GM10248 (cell line): ENCODE measurements at regions of chr6 and their contacts with region 1.

Region 1: GRCh38 chr6:26122793-26123674 is 35.8 kb downstream of the HFE start:
- DNase-seq: peak; percentile 83
- CTCF ChIP-seq: no peak

Region 2: GRCh38 chr6:24554485-24554884 is 1568.5 kb before region 1 on chr6:
- CTCF ChIA-PET with region 1: no interaction called
- POLR2A ChIA-PET with region 1: no interaction called
- DNase-seq: no peak
- CTCF ChIP-seq: no peak

Region 3: DNA sequence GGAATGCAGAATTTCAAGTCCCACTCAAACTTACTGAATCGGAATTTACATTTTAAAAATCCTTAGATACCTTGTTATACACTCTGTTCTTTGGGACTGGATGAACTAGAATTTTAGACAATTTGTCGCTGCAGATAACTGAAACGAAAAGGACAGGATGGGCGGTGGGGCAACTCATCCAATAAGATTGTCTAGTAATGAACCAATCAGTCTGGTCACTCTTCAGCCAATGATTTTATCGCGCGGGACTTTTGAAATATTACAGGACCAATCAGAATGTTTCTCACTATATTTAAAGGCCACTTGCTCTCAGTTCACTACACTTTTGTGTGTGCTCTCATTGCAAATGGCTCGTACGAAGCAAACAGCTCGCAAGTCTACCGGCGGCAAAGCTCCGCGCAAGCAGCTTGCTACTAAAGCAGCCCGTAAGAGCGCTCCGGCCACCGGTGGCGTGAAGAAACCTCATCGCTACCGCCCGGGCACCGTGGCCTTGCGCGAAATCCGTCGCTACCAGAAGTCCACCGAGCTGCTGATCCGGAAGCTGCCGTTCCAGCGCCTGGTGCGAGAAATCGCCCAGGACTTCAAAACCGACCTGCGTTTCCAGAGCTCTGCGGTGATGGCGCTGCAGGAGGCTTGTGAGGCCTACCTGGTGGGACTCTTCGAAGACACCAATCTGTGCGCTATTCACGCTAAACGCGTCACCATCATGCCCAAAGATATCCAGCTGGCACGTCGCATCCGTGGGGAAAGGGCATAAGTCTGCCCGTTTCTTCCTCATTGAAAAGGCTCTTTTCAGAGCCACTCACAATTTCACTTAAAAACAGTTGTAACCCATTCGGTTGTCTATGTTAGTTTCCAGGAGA is 77.7 kb before region 1 on chr6:
- CTCF ChIA-PET with region 1: interaction called, 4 read pairs
- POLR2A ChIA-PET with region 1: interaction called, 40 read pairs
- DNase-seq: peak; percentile 88
- CTCF ChIP-seq: peak; percentile 12

Region 4: DNA sequence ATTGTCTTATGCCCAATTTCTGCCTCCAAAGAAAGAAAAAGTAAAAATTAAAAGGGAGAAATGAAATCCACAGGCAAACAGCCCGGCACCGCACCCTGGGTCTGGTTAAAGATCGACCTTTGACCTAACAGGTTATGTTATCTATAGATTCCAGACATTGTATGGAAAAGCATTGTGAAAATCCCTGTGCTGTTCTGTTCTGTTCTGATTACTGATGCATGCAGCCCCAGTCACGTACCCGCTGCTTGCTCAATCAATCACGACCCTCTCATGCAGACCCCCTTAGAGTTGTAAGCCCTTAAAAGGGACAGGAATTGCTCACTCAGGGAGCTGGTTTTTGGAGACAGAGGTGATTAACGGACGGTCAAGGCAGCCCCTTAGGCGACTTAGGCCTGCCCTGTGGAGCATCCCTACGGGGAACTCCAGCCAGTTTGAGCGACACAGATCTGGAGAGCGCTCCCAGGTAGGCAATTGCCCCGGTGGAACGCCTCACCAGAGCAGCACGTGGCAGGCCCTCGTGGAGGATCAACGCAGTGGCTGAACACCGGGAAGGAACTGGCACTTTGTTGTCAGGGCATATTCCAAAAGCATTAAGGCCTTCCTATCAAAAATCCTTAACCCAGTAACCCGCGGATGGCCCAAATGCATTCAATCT is 47.8 kb before region 1 on chr6:
- CTCF ChIA-PET with region 1: no interaction called
- POLR2A ChIA-PET with region 1: no interaction called
- DNase-seq: no peak
- CTCF ChIP-seq: no peak

Region 5: DNA sequence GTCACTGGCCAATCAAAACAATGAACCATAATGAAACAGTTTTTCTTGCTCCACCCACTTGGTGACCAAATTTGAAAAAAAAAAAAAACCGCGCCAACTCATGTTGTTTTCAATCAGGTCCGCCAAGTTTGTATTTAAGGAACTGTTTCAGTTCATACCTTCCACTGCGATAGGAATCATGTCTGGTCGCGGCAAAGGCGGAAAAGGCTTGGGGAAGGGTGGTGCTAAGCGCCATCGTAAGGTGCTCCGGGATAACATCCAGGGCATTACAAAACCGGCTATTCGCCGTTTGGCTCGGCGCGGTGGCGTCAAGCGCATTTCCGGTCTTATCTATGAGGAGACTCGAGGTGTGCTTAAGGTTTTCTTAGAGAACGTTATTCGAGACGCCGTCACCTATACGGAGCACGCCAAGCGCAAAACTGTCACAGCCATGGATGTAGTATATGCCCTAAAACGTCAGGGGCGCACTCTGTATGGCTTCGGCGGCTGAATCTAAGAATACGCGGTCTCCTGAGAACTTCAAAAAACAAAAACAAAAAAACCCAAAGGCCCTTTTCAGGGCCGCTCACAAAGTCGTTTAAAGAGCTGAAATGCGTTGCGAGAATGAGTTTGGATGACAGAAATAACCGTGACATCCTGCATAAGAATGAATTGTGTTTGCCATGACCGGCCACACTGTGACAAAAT is 19.1 kb before region 1 on chr6:
- CTCF ChIA-PET with region 1: interaction called, 12 read pairs
- POLR2A ChIA-PET with region 1: interaction called, 52 read pairs
- DNase-seq: peak; percentile 78
- CTCF ChIP-seq: peak; percentile 52

Region 6: GRCh38 chr6:27132532-27133280 is 1009.7 kb after region 1 on chr6:
- CTCF ChIA-PET with region 1: no interaction called
- POLR2A ChIA-PET with region 1: interaction called, 10 read pairs
- DNase-seq: peak; percentile 95
- CTCF ChIP-seq: no peak